Activated B cell treated with CpG ODN at 0.5 μM for 24 hours (primary cell): ENCODE measurements at regions of chr1 and their contacts with region 1.

Region 1: GRCh38 chr1:72037745-72038343 is 244.5 kb downstream of the NEGR1 start:
- DNase-seq: no peak
- ATAC-seq: no peak
- H3K4me3 Mint-ChIP-seq: no peak overlapping the region
- H3K27ac Mint-ChIP-seq: no peak overlapping the region
- H3K4me1 Mint-ChIP-seq: no peaks in the 10 kb centered on the region
- H3K27me3 Mint-ChIP-seq: no peaks in the 10 kb centered on the region
- CTCF ChIP-seq: no peak

Region 2: GRCh38 chr1:71093938-71094337 is 943.9 kb before region 1 on chr1:
- CTCF ChIA-PET with region 1: no interaction called
- POLR2A ChIA-PET with region 1: no interaction called
- intact Hi-C with region 1: loop called (anchors 5 kb)
- DNase-seq: no peak
- ATAC-seq: no peak
- H3K4me3 Mint-ChIP-seq: no peak overlapping the region
- H3K27ac Mint-ChIP-seq: no peak overlapping the region
- H3K4me1 Mint-ChIP-seq: no peaks in the 10 kb centered on the region
- H3K27me3 Mint-ChIP-seq: peaks cover 9% of the 10 kb centered on the region
- CTCF ChIP-seq: no peak

Region 3: DNA sequence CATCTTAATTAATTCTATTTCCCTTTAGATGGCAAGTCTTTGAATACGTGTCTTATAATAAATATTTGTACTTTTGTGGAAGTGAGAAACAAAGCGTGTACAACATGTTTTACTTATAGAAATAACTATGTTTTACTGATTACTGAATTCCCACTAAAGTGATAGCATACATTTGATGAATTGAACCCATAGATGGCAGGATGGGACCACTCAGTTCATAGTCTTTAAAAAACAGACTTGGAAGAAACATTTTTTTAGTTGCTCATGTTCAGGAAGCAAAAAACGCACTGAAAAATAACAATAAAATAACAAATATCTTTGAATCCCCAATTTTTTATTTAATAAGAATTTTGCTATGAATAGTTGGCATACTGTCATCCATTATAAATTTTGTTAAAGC is 449.9 kb before region 1 on chr1:
- CTCF ChIA-PET with region 1: no interaction called
- POLR2A ChIA-PET with region 1: no interaction called
- intact Hi-C with region 1: loop called (anchors 2 kb)
- DNase-seq: no peak
- ATAC-seq: no peak
- H3K4me3 Mint-ChIP-seq: no peak overlapping the region
- H3K27ac Mint-ChIP-seq: no peak overlapping the region
- H3K4me1 Mint-ChIP-seq: no peaks in the 10 kb centered on the region
- H3K27me3 Mint-ChIP-seq: no peaks in the 10 kb centered on the region
- CTCF ChIP-seq: no peak

Region 4: GRCh38 chr1:71753746-71754145 is 284.1 kb before region 1 on chr1:
- CTCF ChIA-PET with region 1: no interaction called
- POLR2A ChIA-PET with region 1: no interaction called
- intact Hi-C with region 1: no loop called
- DNase-seq: no peak
- ATAC-seq: no peak
- H3K4me3 Mint-ChIP-seq: no peak overlapping the region
- H3K27ac Mint-ChIP-seq: no peak overlapping the region
- H3K4me1 Mint-ChIP-seq: no peaks in the 10 kb centered on the region
- H3K27me3 Mint-ChIP-seq: no peaks in the 10 kb centered on the region
- CTCF ChIP-seq: no peak